PC-9 (cell line): ENCODE measurements at regions of chr14 and their contacts with region 1.

Region 1: DNA sequence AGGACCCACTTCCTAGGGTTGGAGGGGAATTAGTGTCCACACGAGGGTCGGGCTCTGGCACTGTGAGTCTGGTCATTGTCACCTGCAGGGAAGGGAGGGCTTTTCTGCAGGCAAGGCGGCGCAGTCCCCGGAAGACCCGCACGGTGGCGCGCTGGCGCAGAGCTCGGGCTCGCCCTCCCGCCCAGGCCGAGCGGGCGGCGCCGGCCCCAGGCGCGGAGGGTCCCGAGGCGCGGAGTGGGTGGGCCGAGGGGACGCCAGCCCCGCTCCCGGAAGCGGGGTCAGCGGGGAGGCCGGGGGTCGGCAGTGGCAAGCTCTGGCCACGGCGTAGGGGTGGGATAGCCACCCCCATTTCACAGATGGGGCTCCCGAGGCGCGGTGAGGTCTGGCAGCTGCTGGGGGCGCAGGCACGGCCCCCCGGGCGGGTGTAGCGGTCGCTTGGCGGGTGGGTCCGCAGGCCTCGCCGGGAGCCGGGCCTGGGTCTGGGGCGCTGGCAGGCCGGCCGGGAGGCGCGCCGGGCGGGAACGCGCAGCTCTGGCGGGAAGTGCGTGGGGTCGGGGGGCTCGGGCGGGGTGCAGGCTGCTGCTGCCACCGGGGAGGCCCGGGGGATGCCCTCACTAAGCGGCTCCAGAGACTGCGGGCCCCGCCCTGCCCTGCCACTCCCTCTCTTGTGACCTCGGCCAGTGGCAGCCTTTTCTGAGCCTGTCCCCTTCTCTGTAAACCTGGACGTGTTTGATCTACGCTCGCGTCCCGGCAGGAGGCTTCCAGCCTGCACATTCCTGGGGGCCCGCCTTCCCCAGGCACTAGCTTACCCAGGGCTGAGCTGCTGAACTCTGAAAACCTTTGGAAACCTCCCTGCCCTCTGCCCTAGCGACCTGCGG is 46.1 kb downstream of the CYP46A1 start:
- DNase-seq: peak in 1 of 2 experiments; percentile 43
- H3K4me3 ChIP-seq: no peak overlapping the region
- H3K27ac ChIP-seq: no peak overlapping the region
- H3K4me1 ChIP-seq: no peaks in the 10 kb centered on the region
- H3K27me3 ChIP-seq: 0 out of 2 replicates have a peak, but pooled peaks cover 7% of the 10 kb centered on the region
- CTCF ChIP-seq: peak; percentile 64

Region 2: GRCh38 chr14:99758121-99758821 is 28.0 kb after region 1 on chr14:
- CTCF ChIA-PET with region 1: no interaction called
- POLR2A ChIA-PET with region 1: no interaction called
- intact Hi-C with region 1: no loop called
- DNase-seq: peak in 1 of 2 experiments; percentile 76
- H3K4me3 ChIP-seq: no peak overlapping the region
- H3K27ac ChIP-seq: peak overlapping the region; percentile 76
- H3K4me1 ChIP-seq: peaks cover 52% of the 10 kb centered on the region
- H3K27me3 ChIP-seq: no peaks in the 10 kb centered on the region
- CTCF ChIP-seq: no peak

Region 3: DNA sequence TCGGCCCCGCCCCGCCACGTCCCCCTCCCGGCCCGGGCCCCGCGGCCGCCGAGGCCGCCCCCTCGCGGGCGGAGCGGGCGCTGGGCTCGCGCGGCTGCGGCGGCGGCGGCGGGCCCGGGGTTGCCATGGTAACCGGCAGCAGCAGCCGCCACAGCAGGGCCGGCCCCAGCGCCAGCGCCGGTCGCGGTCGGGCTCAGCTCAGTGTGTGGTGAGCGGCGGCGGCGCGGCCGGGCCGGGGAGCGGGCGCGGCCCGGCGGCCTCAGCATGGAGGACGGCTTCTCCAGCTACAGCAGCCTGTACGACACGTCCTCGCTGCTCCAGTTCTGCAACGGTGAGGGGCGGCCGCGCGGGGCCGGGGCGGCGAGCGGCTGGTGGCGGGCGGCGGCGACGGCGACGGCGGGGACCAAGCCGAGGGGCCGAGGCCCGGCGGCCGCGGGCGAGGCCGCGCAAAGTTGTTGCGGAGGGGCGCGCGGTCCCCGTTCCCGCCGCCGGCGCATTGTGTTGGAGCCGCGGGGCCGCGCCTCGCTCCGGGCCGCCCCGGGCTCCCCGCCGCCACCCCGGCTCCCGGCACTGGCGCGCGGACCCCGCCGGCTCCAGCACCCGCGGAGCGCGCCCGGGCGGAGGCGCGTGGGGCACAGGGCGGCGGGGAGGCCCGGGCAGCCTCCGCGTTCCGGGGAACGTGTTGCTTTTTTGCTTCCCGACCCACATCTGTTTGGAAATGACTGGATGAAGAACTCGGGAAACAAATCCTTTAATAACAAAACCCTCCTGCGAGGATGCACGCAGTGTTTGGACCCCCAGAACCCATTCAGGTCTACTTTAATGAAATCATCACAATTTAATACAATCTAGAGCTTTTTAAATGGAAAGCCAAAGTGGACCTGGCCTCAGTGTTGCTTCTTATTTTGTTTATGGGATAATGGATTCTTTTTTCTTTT is 63.3 kb after region 1 on chr14 and contains the start of gene EML1:
- CTCF ChIA-PET with region 1: no interaction called
- POLR2A ChIA-PET with region 1: no interaction called
- intact Hi-C with region 1: loop called (anchors 10 kb)
- DNase-seq: peak in 1 of 2 experiments; percentile 51
- H3K4me3 ChIP-seq: peak within 1 kb of the TSS; percentile 47; the same call in 1 of the 2 replicates
- H3K27ac ChIP-seq: no peak within 1 kb of the TSS
- H3K4me1 ChIP-seq: peaks cover 8% of the 10 kb centered on the region; the same call in 1 of the 2 replicates
- H3K27me3 ChIP-seq: no peaks in the 10 kb centered on the region
- CTCF ChIP-seq: no peak
- total RNA-seq, gene EML1: 1.8 and 2.4 TPM in 2 replicates

Region 4: DNA sequence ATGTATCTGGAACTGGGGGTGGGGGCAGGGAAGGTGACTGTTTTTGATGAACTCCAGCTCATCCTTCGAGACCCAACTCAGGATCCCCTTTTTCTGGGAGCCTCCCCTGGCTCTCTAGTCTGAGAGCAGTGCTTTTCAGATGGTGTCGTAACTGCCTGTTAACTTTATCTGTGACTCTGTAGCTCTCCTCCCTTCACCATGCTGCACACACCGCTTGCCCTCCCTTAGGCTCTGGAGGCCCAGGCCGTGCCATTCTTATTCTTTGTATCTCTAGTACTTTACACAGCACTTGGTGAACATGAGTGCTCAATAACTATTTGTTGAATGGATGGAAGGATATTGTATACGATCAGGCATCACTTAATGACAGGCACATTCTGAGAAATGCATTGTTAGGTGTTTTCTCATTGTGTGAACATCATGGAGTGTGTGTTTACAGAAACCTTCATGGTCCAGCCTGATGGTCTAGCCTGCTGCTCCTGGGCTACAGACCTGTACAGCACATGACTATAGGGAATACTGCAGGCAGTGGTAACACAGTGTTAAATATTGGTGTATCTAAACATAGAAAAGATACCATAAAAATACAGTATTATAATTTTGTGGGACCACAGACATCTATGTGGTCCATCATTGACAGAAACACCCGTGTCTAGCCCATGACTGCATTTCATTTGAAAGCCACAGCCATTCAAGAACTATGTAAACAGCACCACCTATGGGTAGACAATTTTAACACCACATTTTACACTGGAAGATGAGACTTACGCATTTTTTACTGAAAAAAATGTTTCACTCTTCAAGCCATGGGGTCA is 154.8 kb after region 1 on chr14:
- CTCF ChIA-PET with region 1: no interaction called
- POLR2A ChIA-PET with region 1: no interaction called
- intact Hi-C with region 1: loop called (anchors 1 kb)
- DNase-seq: no peak
- H3K4me3 ChIP-seq: no peak overlapping the region
- H3K27ac ChIP-seq: no peak overlapping the region
- H3K4me1 ChIP-seq: no peaks in the 10 kb centered on the region
- H3K27me3 ChIP-seq: no peaks in the 10 kb centered on the region
- CTCF ChIP-seq: peak; percentile 83